ENCODE measurements at regions of chr6 and their contacts with region 1.

Region 1: DNA sequence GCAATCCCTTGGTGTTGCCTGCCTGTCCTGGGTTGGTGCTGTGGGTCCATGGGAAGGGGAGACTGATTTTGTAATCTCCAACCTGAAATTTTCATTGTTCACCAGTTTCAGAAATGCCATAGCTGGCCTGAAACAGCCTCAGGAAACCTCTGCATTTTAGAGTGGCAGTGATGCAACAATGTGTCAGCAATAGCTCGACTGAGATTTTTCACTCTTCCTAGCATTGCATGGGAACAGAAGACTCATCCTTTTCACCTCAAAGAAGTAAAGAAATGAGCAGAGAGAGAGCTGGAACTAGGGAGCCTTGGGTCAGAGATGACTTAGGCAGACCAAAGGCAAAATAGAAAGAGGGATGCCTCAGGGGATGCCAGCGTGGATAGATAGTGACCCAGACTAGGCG is 23.7 kb upstream of the TMEM14A start:
- DNase-seq: no peak
- ATAC-seq: no peak
- H3K4me3 ChIP-seq: no peak overlapping the region
- H3K27ac ChIP-seq: no peak overlapping the region
- H3K4me1 ChIP-seq: no peaks in the 10 kb centered on the region
- H3K27me3 ChIP-seq: no peaks in the 10 kb centered on the region
- CTCF ChIP-seq: no peak
- POLR2A ChIP-seq: no peak

Region 2: GRCh38 chr6:52598123-52598823 is 48.9 kb before region 1 on chr6:
- in situ Hi-C with region 1: loop called in 1 of 4 experiments (anchors 10 kb)
- intact Hi-C with region 1: no loop called
- DNase-seq: peak in 1 of 2 donors; percentile 40
- ATAC-seq: peak; percentile 39 to 79
- H3K4me3 ChIP-seq: peak overlapping the region in 3 of 4 donors; percentile 22 to 42 (median 35)
- H3K27ac ChIP-seq: no peak overlapping the region
- H3K4me1 ChIP-seq: peaks cover 0 to 15% of the 10 kb centered on the region in 2 donors
- H3K27me3 ChIP-seq: no peaks in the 10 kb centered on the region
- CTCF ChIP-seq: peak; percentile 55 to 74 (median 70)
- POLR2A ChIP-seq: no peak

Measured in gastrocnemius medialis (tissue), 4 donors.